ENCODE measurements at regions of chrX and their contacts with region 1.

Region 1: GRCh38 chrX:40085102-40085551 is 12.6 kb downstream of the BCOR start:
- DNase-seq: no peak
- H3K4me3 ChIP-seq: no peak overlapping the region
- CTCF ChIP-seq: no peak

Region 2: GRCh38 chrX:40153335-40154249 is 68.5 kb after region 1 on chrX:
- in situ Hi-C with region 1: no loop called
- DNase-seq: no peak
- H3K4me3 ChIP-seq: peak overlapping the region; percentile 23
- CTCF ChIP-seq: no peak

Region 3: GRCh38 chrX:40169193-40170101 is 84.3 kb after region 1 on chrX:
- in situ Hi-C with region 1: loop called (anchors 5 kb)
- DNase-seq: peak; percentile 45
- H3K4me3 ChIP-seq: no peak overlapping the region
- CTCF ChIP-seq: peak; percentile 54

Measured in astrocyte of the cerebellum (primary cell).